HEK293 (cell line): ENCODE measurements at regions of chr1 and their contacts with region 1.

Region 1: DNA sequence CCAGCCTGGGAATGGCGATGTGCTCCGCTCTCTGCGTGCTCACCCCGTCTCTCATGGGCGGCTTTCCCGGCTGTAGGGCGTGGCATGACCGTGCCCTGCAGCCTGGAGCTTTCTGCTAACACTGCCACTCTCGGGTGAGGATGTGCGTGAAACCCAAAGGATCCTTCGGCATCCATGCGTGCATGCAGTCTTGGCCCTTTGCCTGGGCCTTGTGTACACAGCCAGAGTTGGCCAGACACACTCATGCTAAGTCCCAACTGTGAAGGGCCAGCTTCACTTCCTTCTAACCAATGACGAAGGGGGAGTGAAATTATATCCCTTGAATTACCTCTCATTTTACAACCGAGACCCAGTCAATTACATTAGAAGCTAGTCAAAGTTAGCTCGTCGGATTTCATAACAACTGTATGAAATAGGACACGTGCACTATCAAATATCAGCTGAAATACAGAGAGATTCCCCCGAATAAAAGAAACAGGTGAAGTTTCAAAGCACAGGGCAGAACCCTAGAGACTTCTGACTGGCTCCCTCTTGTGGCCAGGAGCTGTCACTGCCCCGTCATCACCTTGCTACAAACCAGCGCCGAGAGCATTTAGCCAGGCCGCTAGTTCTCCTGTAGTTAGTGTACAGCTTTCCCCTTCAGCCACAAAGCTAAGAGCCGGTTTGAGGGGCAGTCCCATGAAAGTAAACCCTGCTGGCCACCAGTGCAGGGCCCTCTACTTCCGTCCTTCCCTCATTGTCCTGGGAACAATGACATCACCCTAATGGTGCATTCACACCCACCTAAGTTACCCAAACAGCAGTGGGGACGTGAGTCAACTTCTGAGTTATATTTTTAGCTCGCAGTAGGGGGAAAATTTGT is 63.4 kb upstream of the COA6 start:
- H3K4me3 ChIP-seq: no peak overlapping the region
- H3K27ac ChIP-seq: no peak overlapping the region
- H3K4me1 ChIP-seq: no peaks in the 10 kb centered on the region
- CTCF ChIP-seq: peak; percentile 86

Region 2: GRCh38 chr1:234108921-234109320 is 200.9 kb before region 1 on chr1:
- CTCF ChIA-PET with region 1: interaction called, 86 read pairs
- POLR2A ChIA-PET with region 1: no interaction called
- H3K4me3 ChIP-seq: no peak overlapping the region
- H3K27ac ChIP-seq: no peak overlapping the region
- H3K4me1 ChIP-seq: no peaks in the 10 kb centered on the region
- CTCF ChIP-seq: no peak

Region 3: GRCh38 chr1:234144901-234145300 is 164.9 kb before region 1 on chr1:
- CTCF ChIA-PET with region 1: interaction called, 11 read pairs
- POLR2A ChIA-PET with region 1: no interaction called
- H3K4me3 ChIP-seq: no peak overlapping the region
- H3K27ac ChIP-seq: no peak overlapping the region
- H3K4me1 ChIP-seq: no peaks in the 10 kb centered on the region
- CTCF ChIP-seq: no peak

Region 4: GRCh38 chr1:234205966-234206365 is 103.9 kb before region 1 on chr1:
- CTCF ChIA-PET with region 1: interaction called, 18 read pairs
- POLR2A ChIA-PET with region 1: no interaction called
- H3K4me3 ChIP-seq: no peak overlapping the region
- H3K27ac ChIP-seq: no peak overlapping the region
- H3K4me1 ChIP-seq: no peaks in the 10 kb centered on the region
- CTCF ChIP-seq: no peak

Region 5: DNA sequence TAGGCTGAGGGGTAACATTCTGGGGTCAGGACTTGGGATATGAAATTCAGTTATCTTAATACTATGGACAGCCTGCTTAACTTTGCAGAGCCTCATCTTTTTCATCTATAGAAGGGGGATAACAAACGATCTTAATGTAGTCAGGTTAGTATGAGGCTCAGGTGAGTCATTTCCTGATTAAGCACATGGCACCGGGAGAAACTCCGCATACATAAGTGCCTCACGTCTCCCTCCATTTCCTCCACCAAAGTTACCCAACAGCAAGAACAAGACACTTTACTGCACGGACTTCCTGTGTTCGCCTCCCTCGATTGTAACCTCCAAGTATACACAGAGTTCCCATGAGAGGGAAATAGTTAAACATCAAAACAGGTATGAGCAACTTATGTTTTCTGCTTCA is 49.3 kb before region 1 on chr1:
- CTCF ChIA-PET with region 1: interaction called, 25 read pairs
- POLR2A ChIA-PET with region 1: no interaction called
- H3K4me3 ChIP-seq: no peak overlapping the region
- H3K27ac ChIP-seq: no peak overlapping the region
- H3K4me1 ChIP-seq: no peaks in the 10 kb centered on the region
- CTCF ChIP-seq: no peak

Region 6: GRCh38 chr1:234326497-234327366 is 16.9 kb after region 1 on chr1:
- CTCF ChIA-PET with region 1: interaction called, 199 read pairs
- POLR2A ChIA-PET with region 1: interaction called, 3 read pairs
- H3K4me3 ChIP-seq: peak overlapping the region; percentile 39
- H3K27ac ChIP-seq: no peak overlapping the region
- H3K4me1 ChIP-seq: no peaks in the 10 kb centered on the region
- CTCF ChIP-seq: peak; percentile 91